Activated CD4-positive, alpha-beta T cell treated with anti-CD3 and anti-CD28 coated beads, Interleukin-2, amount 10 ng/mL, durations not matched to agents 24 days and 14 days (primary cell): ENCODE measurements at regions of chr19 and their contacts with region 1.

Region 1: GRCh38 chr19:57746580-57747471 is at the start of gene ZNF776:
- DNase-seq: peak; percentile 95
- H3K4me3 Mint-ChIP-seq: peak within 1 kb of the TSS; percentile 96
- H3K27ac Mint-ChIP-seq: peak within 1 kb of the TSS; percentile 97
- H3K4me1 Mint-ChIP-seq: peaks cover 16% of the 10 kb centered on the region
- H3K27me3 Mint-ChIP-seq: no peaks in the 10 kb centered on the region
- total RNA-seq, gene ZNF776: 7.5 and 7.9 TPM in 2 replicates

Region 2: GRCh38 chr19:57689750-57690149 is 57.1 kb before region 1 on chr19:
- intact Hi-C with region 1: no loop called
- DNase-seq: no peak
- H3K4me3 Mint-ChIP-seq: no peak overlapping the region
- H3K27ac Mint-ChIP-seq: no peak overlapping the region
- H3K4me1 Mint-ChIP-seq: no peaks in the 10 kb centered on the region
- H3K27me3 Mint-ChIP-seq: no peaks in the 10 kb centered on the region

Region 3: DNA sequence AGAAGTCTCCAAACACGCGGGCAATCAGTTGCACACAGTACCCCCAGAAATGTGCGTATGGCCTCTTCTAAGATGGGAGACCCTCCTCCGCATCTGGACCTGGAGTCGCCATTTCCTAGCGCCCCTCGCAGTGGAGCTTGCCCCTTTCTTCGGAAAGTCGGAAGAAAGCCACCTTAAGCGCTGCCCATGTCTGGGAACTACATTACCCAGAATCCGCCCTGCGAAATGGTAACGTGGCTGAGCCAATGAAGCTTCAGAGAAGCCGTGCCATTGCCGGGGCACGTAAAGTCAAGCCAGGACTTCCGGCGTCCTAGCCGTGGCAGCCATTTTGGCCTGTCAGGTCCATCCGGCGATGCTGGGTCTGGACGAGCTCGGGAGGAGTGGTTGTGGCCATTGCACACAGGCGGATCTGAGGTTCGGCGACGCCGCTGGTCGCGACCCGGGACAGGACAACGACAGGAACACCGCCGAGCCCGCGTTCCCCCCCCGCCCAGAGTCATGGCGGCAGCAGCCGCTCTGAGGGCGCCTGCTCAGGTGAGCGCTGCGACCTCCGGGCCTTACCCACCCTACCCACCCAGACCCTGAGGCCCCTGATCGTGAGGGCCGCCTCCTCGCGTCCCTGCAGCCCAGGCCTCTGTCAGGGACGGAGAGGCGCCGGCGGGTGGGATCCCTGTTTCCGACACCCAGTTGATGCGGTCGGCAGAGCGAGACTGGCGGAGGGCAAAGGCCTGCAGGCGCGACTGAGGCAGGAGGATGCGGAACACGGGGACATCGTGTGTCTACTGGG is 22.7 kb after region 1 on chr19 and contains the start of gene ZNF586:
- intact Hi-C with region 1: loop called (anchors 1 kb)
- DNase-seq: peak; percentile 96
- H3K4me3 Mint-ChIP-seq: peak within 1 kb of the TSS; percentile 91
- H3K27ac Mint-ChIP-seq: peak within 1 kb of the TSS; percentile 92
- H3K4me1 Mint-ChIP-seq: peaks cover 13% of the 10 kb centered on the region
- H3K27me3 Mint-ChIP-seq: no peaks in the 10 kb centered on the region
- total RNA-seq, gene ZNF586: 11.5 and 13.5 TPM in 2 replicates

Region 4: DNA sequence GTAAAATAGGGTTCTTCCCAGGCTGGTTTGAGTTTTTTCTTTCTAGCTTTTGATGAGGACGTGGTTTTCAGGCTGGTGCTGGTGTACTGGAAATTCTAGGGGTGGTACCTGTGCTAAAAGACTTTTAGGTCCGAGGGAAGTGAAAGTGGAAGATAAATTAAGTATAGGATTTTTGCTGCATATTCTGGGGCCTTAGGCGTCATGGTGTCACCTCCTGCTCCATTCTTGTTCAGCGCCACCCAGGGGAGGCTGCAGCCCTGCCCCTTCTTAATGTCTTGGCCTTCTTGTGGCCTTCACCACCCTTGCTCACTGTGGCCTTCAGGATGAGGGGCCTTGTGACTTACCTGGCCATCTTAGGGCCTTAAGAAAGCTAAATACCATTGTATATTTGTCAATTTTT is 55.4 kb after region 1 on chr19:
- intact Hi-C with region 1: no loop called
- DNase-seq: no peak
- H3K4me3 Mint-ChIP-seq: no peak overlapping the region
- H3K27ac Mint-ChIP-seq: no peak overlapping the region
- H3K4me1 Mint-ChIP-seq: peaks cover 12% of the 10 kb centered on the region
- H3K27me3 Mint-ChIP-seq: no peaks in the 10 kb centered on the region

Region 5: GRCh38 chr19:57978586-57979289 is 231.9 kb after region 1 on chr19:
- intact Hi-C with region 1: no loop called
- DNase-seq: no peak
- H3K4me3 Mint-ChIP-seq: no peak overlapping the region
- H3K27ac Mint-ChIP-seq: no peak overlapping the region
- H3K4me1 Mint-ChIP-seq: no peaks in the 10 kb centered on the region
- H3K27me3 Mint-ChIP-seq: no peaks in the 10 kb centered on the region

Region 6: DNA sequence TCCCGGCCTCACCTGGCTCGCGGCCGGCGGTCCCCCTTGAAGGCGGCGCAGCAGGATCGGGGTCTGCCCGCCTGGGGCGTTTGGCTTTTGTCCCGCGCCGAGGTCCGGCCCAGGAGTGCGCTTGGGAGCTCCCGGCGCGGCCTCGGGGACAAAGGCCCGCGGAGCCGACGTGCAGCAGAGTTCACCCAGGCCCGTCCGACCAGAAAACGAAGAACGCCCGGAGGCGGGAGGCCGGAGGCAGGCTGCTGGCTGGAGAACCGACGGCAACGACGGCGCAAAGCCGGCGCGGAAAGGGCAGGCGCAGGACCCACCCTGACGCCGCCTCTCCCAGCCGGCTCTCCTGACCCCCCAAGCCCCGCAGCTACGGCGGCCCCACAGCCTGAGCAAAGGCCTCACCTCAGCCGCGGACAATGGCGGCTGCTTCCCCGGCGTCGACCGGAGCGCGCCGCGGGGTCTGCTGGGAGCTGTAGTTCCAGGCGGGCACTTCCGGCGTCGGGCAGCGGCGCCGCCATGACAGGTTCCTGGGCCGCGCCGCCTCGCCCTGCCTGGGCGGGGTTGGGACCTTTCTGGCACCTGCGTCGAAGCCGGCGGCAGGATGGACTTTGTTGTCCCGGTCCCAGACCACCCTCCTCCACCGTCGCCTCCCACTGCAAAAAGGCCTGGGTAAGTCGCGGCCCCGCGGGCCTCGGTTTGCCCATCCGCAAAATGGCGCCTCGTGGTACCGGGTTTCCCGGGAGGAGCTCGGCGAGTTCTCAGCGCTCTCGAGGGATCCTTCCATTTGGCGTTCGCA is 255.8 kb after region 1 on chr19 and contains the start of gene ZNF606:
- intact Hi-C with region 1: loop called (anchors 10 kb)
- DNase-seq: peak; percentile 95
- H3K4me3 Mint-ChIP-seq: peak within 1 kb of the TSS; percentile 84
- H3K27ac Mint-ChIP-seq: peak within 1 kb of the TSS; percentile 88
- H3K4me1 Mint-ChIP-seq: peaks cover 11% of the 10 kb centered on the region
- H3K27me3 Mint-ChIP-seq: no peaks in the 10 kb centered on the region
- total RNA-seq, gene ZNF606: 6.6 and 7.0 TPM in 2 replicates

Region 7: GRCh38 chr19:58033741-58034471 is 287.1 kb after region 1 on chr19 and contains the start of gene ZSCAN1:
- intact Hi-C with region 1: no loop called
- DNase-seq: peak; percentile 54
- H3K4me3 Mint-ChIP-seq: no peak within 1 kb of the TSS
- H3K27ac Mint-ChIP-seq: no peak within 1 kb of the TSS
- H3K4me1 Mint-ChIP-seq: no peaks in the 10 kb centered on the region
- H3K27me3 Mint-ChIP-seq: peaks cover 1% of the 10 kb centered on the region
- total RNA-seq, gene ZSCAN1: not detected in 2 replicates